ENCODE measurements at regions of chr17 and their contacts with region 1.

Region 1: GRCh38 chr17:29369831-29370735 is 20.1 kb upstream of the TAOK1 start:
- DNase-seq: peak; percentile 16 to 79 (median 50)
- ATAC-seq: peak; percentile 92
- H3K4me3 ChIP-seq: no peak overlapping the region
- H3K4me3 Mint-ChIP-seq: no peak overlapping the region
- H3K27ac ChIP-seq: peak overlapping the region in 1 of 2 experiments; percentile 49
- H3K27ac Mint-ChIP-seq: no peak overlapping the region
- H3K4me1 ChIP-seq: peaks cover 6% of the 10 kb centered on the region
- H3K4me1 Mint-ChIP-seq: no peaks in the 10 kb centered on the region
- H3K27me3 ChIP-seq: no peaks in the 10 kb centered on the region
- H3K27me3 Mint-ChIP-seq: no peaks in the 10 kb centered on the region
- CTCF ChIP-seq: peak; percentile 81

Region 2: DNA sequence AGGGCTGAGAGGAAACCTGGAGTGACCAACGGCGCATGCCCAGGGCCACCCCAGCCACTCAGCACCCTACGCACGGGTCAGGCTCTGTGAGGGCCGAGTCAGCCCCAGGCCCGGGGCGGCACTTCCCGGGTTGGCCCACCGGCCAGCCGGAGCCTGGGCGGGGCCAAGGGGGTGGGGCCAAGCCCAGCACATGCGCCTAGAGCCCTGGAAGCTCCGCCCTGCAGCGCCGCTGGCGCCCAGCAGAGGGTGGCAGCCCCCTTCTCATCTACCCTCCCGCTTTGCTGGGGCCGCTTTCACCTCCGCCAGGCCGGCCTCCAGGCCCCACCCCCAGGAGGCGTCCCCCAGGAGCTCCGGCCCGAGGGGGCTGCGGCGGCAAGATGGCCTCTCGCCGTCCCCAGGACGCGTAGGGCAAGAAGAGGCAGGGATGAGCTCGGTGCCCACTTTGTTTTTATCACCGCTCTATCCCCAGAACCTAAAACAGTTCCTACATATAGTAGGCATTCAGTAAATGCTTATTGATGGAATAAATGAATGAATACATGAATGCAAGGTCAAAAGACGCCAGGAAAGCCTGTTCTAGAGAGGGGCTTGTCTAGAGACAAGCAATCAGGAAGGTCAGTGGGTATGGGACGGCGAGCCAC is 221.2 kb before region 1 on chr17:
- CTCF ChIA-PET with region 1: interaction called, 7 read pairs
- POLR2A ChIA-PET with region 1: no interaction called
- intact Hi-C with region 1: loop called in 1 of 2 experiments (anchors 1 kb)
- DNase-seq: peak; percentile 82 to 95 (median 91)
- ATAC-seq: peak; percentile 97
- H3K4me3 ChIP-seq: peak overlapping the region; percentile 54 to 56
- H3K4me3 Mint-ChIP-seq: peak overlapping the region; percentile 76
- H3K27ac ChIP-seq: peak overlapping the region in 1 of 2 experiments; percentile 88
- H3K27ac Mint-ChIP-seq: peak overlapping the region; percentile 87
- H3K4me1 ChIP-seq: peaks cover 23% of the 10 kb centered on the region
- H3K4me1 Mint-ChIP-seq: peaks cover 33% of the 10 kb centered on the region
- H3K27me3 ChIP-seq: no peaks in the 10 kb centered on the region
- H3K27me3 Mint-ChIP-seq: no peaks in the 10 kb centered on the region
- CTCF ChIP-seq: peak; percentile 98

Region 3: GRCh38 chr17:29176558-29177351 is 193.3 kb before region 1 on chr17:
- CTCF ChIA-PET with region 1: no interaction called
- POLR2A ChIA-PET with region 1: no interaction called
- intact Hi-C with region 1: no loop called
- DNase-seq: peak in 8 of 9 experiments; percentile 36 to 75 (median 58)
- ATAC-seq: peak; percentile 43
- H3K4me3 ChIP-seq: peak overlapping the region; percentile 58 to 70
- H3K4me3 Mint-ChIP-seq: peak overlapping the region; percentile 89
- H3K27ac ChIP-seq: peak overlapping the region; percentile 35 to 68
- H3K27ac Mint-ChIP-seq: peak overlapping the region; percentile 91
- H3K4me1 ChIP-seq: peaks cover 22% of the 10 kb centered on the region
- H3K4me1 Mint-ChIP-seq: peaks cover 20% of the 10 kb centered on the region
- H3K27me3 ChIP-seq: no peaks in the 10 kb centered on the region
- H3K27me3 Mint-ChIP-seq: no peaks in the 10 kb centered on the region
- CTCF ChIP-seq: no peak

Region 4: GRCh38 chr17:29389982-29390850 is 20.1 kb after region 1 on chr17 and contains the start of gene TAOK1:
- CTCF ChIA-PET with region 1: interaction called, 9 read pairs
- POLR2A ChIA-PET with region 1: interaction called, 3 read pairs
- intact Hi-C with region 1: loop called (anchors 1 to 2 kb)
- DNase-seq: peak; percentile 94 to 99 (median 98)
- ATAC-seq: peak; percentile 91
- H3K4me3 ChIP-seq: peak within 1 kb of the TSS; percentile 77 to 85
- H3K4me3 Mint-ChIP-seq: peak within 1 kb of the TSS; percentile 93
- H3K27ac ChIP-seq: peak within 1 kb of the TSS; percentile 84 to 87
- H3K27ac Mint-ChIP-seq: peak within 1 kb of the TSS; percentile 98
- H3K4me1 ChIP-seq: peaks cover 22% of the 10 kb centered on the region
- H3K4me1 Mint-ChIP-seq: peaks cover 41% of the 10 kb centered on the region
- H3K27me3 ChIP-seq: no peaks in the 10 kb centered on the region
- H3K27me3 Mint-ChIP-seq: no peaks in the 10 kb centered on the region
- CTCF ChIP-seq: no peak
- total RNA-seq, gene TAOK1: 25.2 to 26.8 TPM

Region 5: GRCh38 chr17:29475891-29476290 is 105.8 kb after region 1 on chr17:
- CTCF ChIA-PET with region 1: interaction called, 5 read pairs
- POLR2A ChIA-PET with region 1: no interaction called
- intact Hi-C with region 1: loop called in 1 of 2 experiments (anchors 10 kb)
- DNase-seq: no peak
- ATAC-seq: no peak
- H3K4me3 ChIP-seq: no peak overlapping the region
- H3K4me3 Mint-ChIP-seq: no peak overlapping the region
- H3K27ac ChIP-seq: no peak overlapping the region
- H3K27ac Mint-ChIP-seq: no peak overlapping the region
- H3K4me1 ChIP-seq: no peaks in the 10 kb centered on the region
- H3K4me1 Mint-ChIP-seq: no peaks in the 10 kb centered on the region
- H3K27me3 ChIP-seq: no peaks in the 10 kb centered on the region
- H3K27me3 Mint-ChIP-seq: no peaks in the 10 kb centered on the region
- CTCF ChIP-seq: no peak

Region 6: DNA sequence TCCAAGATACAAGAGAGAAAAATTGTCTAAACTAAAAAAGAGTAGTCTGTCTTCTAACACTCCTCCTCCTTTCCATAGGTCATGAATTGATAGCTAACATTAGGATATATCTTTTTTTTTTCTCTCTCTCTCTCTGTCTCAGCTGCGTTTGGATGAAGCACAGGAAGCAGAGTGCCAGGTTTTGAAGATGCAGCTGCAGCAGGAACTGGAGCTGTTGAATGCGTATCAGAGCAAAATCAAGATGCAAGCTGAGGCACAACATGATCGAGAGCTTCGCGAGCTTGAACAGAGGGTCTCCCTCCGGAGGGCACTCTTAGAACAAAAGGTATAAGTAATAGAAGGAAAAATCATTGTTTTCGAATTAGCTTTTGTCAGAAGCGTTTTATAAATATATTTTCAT is 163.9 kb after region 1 on chr17:
- CTCF ChIA-PET with region 1: interaction called, 61 read pairs
- POLR2A ChIA-PET with region 1: no interaction called
- intact Hi-C with region 1: loop called (anchors 1 kb)
- DNase-seq: no peak
- ATAC-seq: no peak
- H3K4me3 ChIP-seq: no peak overlapping the region
- H3K4me3 Mint-ChIP-seq: no peak overlapping the region
- H3K27ac ChIP-seq: no peak overlapping the region
- H3K27ac Mint-ChIP-seq: no peak overlapping the region
- H3K4me1 ChIP-seq: no peaks in the 10 kb centered on the region
- H3K4me1 Mint-ChIP-seq: no peaks in the 10 kb centered on the region
- H3K27me3 ChIP-seq: no peaks in the 10 kb centered on the region
- H3K27me3 Mint-ChIP-seq: no peaks in the 10 kb centered on the region
- CTCF ChIP-seq: no peak

Measured in CD8-positive, alpha-beta T cell (primary cell).